Right cardiac atrium (tissue), 5 donors: ENCODE measurements at regions of chr5 and their contacts with region 1.

Region 1: GRCh38 chr5:112146323-112147226 is 272.5 kb downstream of the EPB41L4A start:
- DNase-seq: peak in 1 of 3 donors; percentile 20
- ATAC-seq: peak; percentile 83 to 86
- H3K4me3 ChIP-seq: no peak overlapping the region
- H3K27ac ChIP-seq: no peak overlapping the region
- H3K4me1 ChIP-seq: peaks cover 5% of the 10 kb centered on the region
- H3K27me3 ChIP-seq: no peaks in the 10 kb centered on the region

Region 2: GRCh38 chr5:111158105-111158744 is 988.4 kb before region 1 on chr5:
- intact Hi-C with region 1: loop called in 3 of 4 experiments (anchors 5 kb)
- DNase-seq: peak in 2 of 3 donors; percentile 46 to 63
- ATAC-seq: peak; percentile 61 to 75
- H3K4me3 ChIP-seq: no peak overlapping the region
- H3K27ac ChIP-seq: no peak overlapping the region
- H3K4me1 ChIP-seq: no peaks in the 10 kb centered on the region
- H3K27me3 ChIP-seq: no peaks in the 10 kb centered on the region

Region 3: GRCh38 chr5:111512375-111513130 is 634.0 kb before region 1 on chr5 and contains the start of gene STARD4:
- intact Hi-C with region 1: no loop called
- DNase-seq: peak; percentile 97 to 99 (median 98)
- ATAC-seq: peak; percentile 99
- H3K4me3 ChIP-seq: peak within 1 kb of the TSS; percentile 53
- H3K27ac ChIP-seq: peak within 1 kb of the TSS; percentile 91
- H3K4me1 ChIP-seq: no peaks in the 10 kb centered on the region
- H3K27me3 ChIP-seq: no peaks in the 10 kb centered on the region
- total RNA-seq, gene STARD4: 14.6 to 32.3 (median 19.8) TPM

Region 4: DNA sequence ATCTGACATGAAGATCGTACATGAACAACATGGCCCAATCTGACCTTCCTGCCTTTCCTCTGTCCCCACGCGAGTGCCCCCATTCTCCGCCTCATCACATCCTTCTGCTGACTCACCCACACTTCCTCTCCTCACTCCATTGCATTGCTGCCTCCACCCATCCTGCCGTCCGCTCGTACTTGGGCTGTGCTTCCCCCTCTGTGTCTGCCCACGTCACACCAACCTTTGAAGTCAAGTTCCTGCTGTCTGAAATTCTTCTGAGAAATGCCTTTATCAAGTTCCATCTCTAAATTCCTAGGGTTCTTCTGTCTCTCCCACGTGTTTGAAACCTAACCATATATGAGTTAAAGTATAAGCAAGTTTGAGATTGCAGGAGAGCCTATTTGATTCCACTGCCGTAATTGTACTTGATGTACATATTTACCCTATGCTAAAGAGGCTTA is 616.3 kb before region 1 on chr5:
- intact Hi-C with region 1: loop called in 3 of 4 experiments (anchors 5 to 10 kb)
- DNase-seq: peak; percentile 79 to 87 (median 85)
- ATAC-seq: peak; percentile 95 to 100
- H3K4me3 ChIP-seq: no peak overlapping the region
- H3K27ac ChIP-seq: no peak overlapping the region
- H3K4me1 ChIP-seq: no peaks in the 10 kb centered on the region
- H3K27me3 ChIP-seq: no peaks in the 10 kb centered on the region

Region 5: DNA sequence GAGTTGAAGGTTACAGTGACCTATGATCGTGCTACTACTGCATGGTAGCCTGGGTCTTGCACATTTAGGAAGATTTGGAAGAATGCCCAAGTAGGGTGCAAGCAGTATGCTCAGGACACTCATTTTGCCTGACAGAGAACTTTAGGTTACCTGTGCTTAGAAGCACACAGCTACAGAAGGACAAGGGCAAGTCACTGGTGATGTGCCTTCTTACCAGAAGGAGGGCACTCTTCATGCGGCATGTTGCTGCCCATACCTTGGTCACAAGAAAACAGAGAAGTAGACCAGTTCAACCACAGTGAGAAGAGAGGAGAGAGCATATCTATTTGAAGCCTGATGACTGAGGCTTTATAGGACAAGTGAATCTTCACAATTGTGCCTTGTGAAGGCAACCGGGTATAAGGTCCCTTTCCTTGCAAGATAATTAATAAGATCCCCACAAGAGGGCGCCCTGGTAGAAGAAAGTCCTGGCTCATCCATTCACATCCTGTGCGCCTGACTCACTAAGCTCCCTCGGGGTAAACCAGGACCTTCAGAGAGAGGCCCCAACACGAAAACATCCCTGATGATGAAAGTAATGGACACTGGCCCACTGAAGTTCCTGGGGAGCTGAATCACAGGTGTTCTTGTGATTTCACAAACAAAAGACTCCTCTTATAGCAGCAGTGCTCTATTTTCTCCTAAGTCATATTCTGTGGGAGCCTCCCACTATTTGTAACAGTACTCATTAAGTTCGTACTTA is 596.1 kb before region 1 on chr5:
- intact Hi-C with region 1: loop called in 3 of 4 experiments (anchors 5 kb)
- DNase-seq: peak; percentile 67 to 77 (median 76)
- ATAC-seq: peak; percentile 93 to 94
- H3K4me3 ChIP-seq: no peak overlapping the region
- H3K27ac ChIP-seq: peak overlapping the region; percentile 43
- H3K4me1 ChIP-seq: peaks cover 4% of the 10 kb centered on the region
- H3K27me3 ChIP-seq: no peaks in the 10 kb centered on the region